ENCODE measurements at regions of chr2 and their contacts with region 1.

Region 1: DNA sequence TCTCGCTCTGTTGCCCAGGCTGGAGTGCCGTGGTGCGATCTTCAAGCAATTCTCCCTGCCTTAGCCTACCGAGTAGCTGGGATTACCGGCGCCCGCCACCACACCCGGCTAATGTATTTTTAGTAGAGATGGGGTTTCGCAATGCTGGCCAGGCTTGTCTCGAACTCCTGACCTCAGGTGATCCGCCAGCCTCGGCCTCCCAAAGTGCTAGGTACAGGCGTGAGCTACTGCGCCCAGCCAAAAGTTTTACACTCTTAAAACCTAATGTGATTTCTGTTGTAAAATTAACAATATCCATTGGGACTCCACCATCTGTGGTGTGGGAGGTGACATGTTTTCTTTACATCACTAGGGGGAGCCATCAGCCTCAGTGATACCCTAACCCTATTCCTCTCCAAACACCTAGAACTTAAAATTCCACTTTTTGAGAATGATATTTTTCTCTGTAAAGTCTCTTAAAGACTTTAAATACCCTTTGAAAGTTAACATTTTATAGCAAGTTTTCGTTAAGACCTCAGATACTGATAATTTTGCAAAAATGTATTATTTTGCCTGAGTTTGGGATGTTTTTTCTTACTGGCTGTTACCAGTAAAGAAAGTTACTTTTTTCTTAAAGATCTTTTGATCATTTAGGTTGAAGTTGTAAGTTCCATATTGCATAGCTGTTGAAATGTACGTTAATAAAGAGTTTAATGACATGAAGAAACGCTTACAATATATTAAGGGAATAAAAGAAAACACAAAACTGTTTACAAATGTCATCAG is 11.6 kb upstream of the EIF2AK2 start:
- DNase-seq: no peak
- H3K4me3 Mint-ChIP-seq: no peak overlapping the region
- H3K27ac Mint-ChIP-seq: no peak overlapping the region
- H3K4me1 Mint-ChIP-seq: no peaks in the 10 kb centered on the region
- H3K27me3 Mint-ChIP-seq: peaks cover 4% of the 10 kb centered on the region

Region 2: GRCh38 chr2:37276291-37276690 is 107.9 kb after region 1 on chr2:
- intact Hi-C with region 1: loop called (anchors 5 kb)
- DNase-seq: no peak
- H3K4me3 Mint-ChIP-seq: no peak overlapping the region
- H3K27ac Mint-ChIP-seq: no peak overlapping the region
- H3K4me1 Mint-ChIP-seq: no peaks in the 10 kb centered on the region
- H3K27me3 Mint-ChIP-seq: no peaks in the 10 kb centered on the region

Region 3: DNA sequence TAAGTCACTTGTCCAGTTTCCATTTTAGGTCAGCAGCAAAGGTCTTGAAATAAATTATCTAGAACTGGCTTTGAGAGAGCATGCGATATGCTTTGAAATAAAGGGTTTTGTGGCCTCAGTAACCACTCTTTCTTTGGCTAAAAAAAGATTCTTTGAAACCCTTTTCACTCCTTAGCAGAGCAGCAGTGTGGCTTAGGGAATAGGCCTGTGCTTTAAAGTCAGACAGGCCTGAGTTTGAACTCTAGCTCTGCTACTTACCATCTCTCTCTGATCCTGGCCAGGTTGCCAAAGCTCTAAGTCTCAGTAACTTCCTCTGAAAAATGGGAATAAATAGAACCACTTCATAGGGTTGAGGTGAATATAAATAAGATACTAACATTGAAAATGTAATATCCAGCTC is 228.8 kb after region 1 on chr2:
- intact Hi-C with region 1: loop called (anchors 2 kb)
- DNase-seq: no peak
- H3K4me3 Mint-ChIP-seq: no peak overlapping the region
- H3K27ac Mint-ChIP-seq: no peak overlapping the region
- H3K4me1 Mint-ChIP-seq: peaks cover 8% of the 10 kb centered on the region
- H3K27me3 Mint-ChIP-seq: peaks cover 30% of the 10 kb centered on the region

Region 4: GRCh38 chr2:37832590-37833197 is 664.3 kb after region 1 on chr2:
- intact Hi-C with region 1: loop called (anchors 1 kb)
- DNase-seq: peak; percentile 60
- H3K4me3 Mint-ChIP-seq: no peak overlapping the region
- H3K27ac Mint-ChIP-seq: no peak overlapping the region
- H3K4me1 Mint-ChIP-seq: peaks cover 14% of the 10 kb centered on the region
- H3K27me3 Mint-ChIP-seq: no peaks in the 10 kb centered on the region

Region 5: DNA sequence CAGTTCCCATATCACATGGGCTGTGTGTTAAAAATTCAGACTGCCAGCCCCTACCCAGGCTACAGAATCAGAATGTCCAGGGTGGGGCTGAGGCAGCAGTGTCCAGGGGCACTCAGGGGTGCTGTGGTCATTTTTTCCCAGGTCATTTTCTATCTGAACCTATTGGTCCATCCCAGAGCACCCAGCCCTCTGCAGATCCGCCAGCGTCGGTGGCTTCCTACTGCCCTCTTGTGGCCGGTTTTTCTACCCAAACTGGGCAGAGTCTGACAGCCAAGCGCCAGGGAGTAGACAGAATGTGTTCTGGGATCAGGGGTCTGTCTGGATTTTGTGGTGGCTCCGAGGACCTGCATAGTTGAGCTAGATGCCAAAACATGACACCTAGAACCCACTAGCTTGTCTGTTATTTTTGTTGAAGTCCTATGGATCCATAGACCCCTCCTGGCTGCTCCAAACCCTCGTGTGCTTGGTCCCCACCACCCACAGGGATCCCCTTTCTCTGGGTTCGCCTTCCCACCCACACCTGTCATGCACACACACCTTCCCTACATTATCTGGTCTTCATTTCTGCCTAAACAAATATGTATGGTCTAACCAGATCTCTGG is 722.6 kb after region 1 on chr2:
- intact Hi-C with region 1: loop called (anchors 1 kb)
- DNase-seq: peak; percentile 35
- H3K4me3 Mint-ChIP-seq: no peak overlapping the region
- H3K27ac Mint-ChIP-seq: no peak overlapping the region
- H3K4me1 Mint-ChIP-seq: peaks cover 8% of the 10 kb centered on the region
- H3K27me3 Mint-ChIP-seq: peaks cover 13% of the 10 kb centered on the region

Region 6: GRCh38 chr2:38106405-38107094 is 938.2 kb after region 1 on chr2:
- intact Hi-C with region 1: no loop called
- DNase-seq: no peak
- H3K4me3 Mint-ChIP-seq: peak overlapping the region; percentile 53
- H3K27ac Mint-ChIP-seq: peak overlapping the region; percentile 57
- H3K4me1 Mint-ChIP-seq: peaks cover 27% of the 10 kb centered on the region
- H3K27me3 Mint-ChIP-seq: no peaks in the 10 kb centered on the region

Measured in activated T-helper 1 cell treated with anti-CD3 and anti-CD28 coated beads, Interleukin-12 subunit alpha, Interleukin-12 subunit beta, Interleukin-2, Interleukin-4 antibody, amounts not matched to agents 30 ng/mL and 10 ng/mL and 1 ng/mL, durations not matched to agents 14 hours and 24 hours and 36 hours (primary cell).